GM10248 (cell line): ENCODE measurements at regions of chr4 and their contacts with region 1.

Region 1: GRCh38 chr4:84568496-84568895 is 14.4 kb upstream of the CDS1 start:
- DNase-seq: no peak
- CTCF ChIP-seq: no peak

Region 2: DNA sequence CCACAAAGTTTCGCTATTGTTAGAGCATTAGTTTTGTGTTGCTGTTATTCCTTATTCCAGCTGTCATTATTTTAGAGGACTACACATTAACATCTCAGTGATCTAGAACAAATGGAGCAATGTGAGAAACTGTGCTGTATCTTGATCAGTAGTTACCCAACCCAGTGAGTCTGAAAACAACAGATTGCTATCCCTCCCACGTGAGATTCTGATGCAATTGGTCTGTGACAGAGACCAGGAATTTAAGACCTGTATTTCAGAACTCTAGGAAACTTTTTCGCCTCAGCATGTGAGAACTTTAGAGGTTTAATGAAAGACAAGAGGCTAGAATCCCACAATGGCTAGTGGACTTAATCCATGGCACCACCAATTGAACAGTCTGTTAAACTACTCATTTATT is 21.3 kb before region 1 on chr4:
- CTCF ChIA-PET with region 1: no interaction called
- POLR2A ChIA-PET with region 1: no interaction called
- DNase-seq: no peak
- CTCF ChIP-seq: no peak

Region 3: GRCh38 chr4:84578540-84579402 is 10.3 kb after region 1 on chr4:
- CTCF ChIA-PET with region 1: interaction called, 11 read pairs
- POLR2A ChIA-PET with region 1: no interaction called
- DNase-seq: no peak
- CTCF ChIP-seq: peak; percentile 32